ENCODE measurements at regions of chr6 and their contacts with region 1.

Region 1: DNA sequence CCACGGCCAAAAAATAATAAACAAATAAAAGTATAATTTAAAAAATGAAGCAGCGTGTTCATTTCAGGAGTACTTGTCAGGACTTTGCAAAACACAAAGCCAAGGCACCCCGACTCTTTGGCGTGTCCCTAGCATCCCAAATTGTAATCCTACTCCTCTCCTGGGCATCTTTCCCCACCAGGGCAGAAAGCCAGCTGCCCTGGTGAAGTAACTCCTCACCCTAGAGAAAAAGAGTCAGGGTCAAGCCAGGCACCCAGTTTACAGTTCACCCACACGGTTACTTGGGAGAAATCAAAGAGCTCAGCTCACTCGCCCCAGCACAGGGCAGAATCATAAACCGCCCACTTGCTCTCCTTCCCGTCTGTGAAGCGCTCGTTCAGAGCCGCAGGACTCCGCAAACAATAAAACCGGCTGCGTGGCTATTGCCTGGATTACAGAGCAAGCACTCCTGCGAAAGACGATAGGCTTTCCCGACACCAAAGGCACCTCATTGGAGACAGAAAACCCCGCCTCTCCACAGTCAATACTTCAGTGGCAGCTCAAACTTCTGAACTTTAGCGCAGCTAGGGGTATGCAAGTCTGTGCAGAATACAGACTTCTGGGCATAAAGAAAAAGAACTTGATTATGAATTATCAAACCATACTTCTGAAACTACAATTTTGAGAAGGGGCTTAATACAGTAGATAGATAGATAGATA is 73.0 kb upstream of the NHSL1 start:
- DNase-seq: peak in 1 of 2 experiments; percentile 64
- H3K4me3 ChIP-seq: peak overlapping the region; percentile 50 to 66 (median 62)
- H3K27ac ChIP-seq: 0 out of 2 replicates have a peak overlapping the region, but pooled peaks have one; percentile 5
- H3K4me1 ChIP-seq: peaks cover 0 to 18% (median 6%) of the 10 kb centered on the region in 4 experiments; a peak in 5 of 7 replicates
- H3K27me3 ChIP-seq: no peaks in the 10 kb centered on the region
- CTCF ChIP-seq: no peak
- EP300 ChIP-seq: no peak
- POLR2A ChIP-seq: peak in 1 of 2 experiments; percentile 73; a peak in 2 of 3 replicates
- RAD21 ChIP-seq: no peak

Region 2: DNA sequence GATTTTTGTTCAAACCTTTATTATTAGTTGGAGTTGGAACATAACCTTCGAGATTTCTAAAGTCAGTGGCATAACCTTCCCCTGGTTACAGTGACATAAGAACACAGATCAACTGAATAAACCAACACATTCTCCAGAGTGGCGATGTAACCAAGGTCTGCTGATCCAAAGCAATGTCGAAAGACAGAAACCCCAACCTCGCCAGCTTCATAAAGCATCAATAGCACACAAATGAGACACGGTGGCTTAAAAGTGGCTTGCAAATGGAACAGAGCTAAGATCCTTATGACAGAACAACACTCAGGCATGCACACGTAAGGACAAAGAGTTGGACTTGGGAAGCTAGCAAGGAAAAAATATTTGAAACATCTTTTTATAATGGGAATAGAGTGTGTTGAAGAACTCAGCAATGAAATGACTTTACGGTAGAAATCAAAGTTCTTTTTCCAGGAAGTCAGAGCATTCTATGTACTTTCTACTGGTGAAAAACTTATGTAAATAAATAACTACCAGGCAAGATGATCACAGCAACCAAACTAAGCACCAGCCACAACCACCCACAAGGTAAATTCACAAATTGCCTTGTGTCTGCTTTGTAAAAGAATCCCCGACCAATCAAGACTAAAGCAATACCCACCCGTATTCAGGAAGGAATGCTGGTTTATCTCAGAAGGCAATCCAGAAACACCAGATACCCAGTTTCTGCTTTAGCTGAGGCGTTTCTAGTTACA is 12.0 kb before region 1 on chr6:
- CTCF ChIA-PET with region 1: interaction called, 15 read pairs
- POLR2A ChIA-PET with region 1: interaction called, 8 read pairs
- DNase-seq: peak in 1 of 2 experiments; percentile 33
- H3K4me3 ChIP-seq: no peak overlapping the region
- H3K27ac ChIP-seq: no peak overlapping the region
- H3K4me1 ChIP-seq: peaks cover 0 to 16% (median 6%) of the 10 kb centered on the region in 4 experiments; a peak in 3 of 7 replicates
- H3K27me3 ChIP-seq: no peaks in the 10 kb centered on the region
- CTCF ChIP-seq: no peak
- EP300 ChIP-seq: no peak
- POLR2A ChIP-seq: no peak
- RAD21 ChIP-seq: no peak

Measured in H1 (cell line).